Gastrocnemius medialis (tissue), 4 donors: ENCODE measurements at regions of chr1 and their contacts with region 1.

Region 1: GRCh38 chr1:220786337-220787068 is at the start of gene MTARC1:
- DNase-seq: peak; percentile 23 to 56
- ATAC-seq: peak; percentile 74 to 79
- H3K4me3 ChIP-seq: peak within 1 kb of the TSS; percentile 63 to 78 (median 66)
- H3K27ac ChIP-seq: peak within 1 kb of the TSS; percentile 56 to 76 (median 61)
- H3K4me1 ChIP-seq: peaks cover 14 to 30% of the 10 kb centered on the region in 2 donors
- H3K27me3 ChIP-seq: no peaks in the 10 kb centered on the region
- CTCF ChIP-seq: peak in 2 of 5 experiments; percentile 29 to 48
- POLR2A ChIP-seq: peak in 1 of 2 donors; percentile 20
- total RNA-seq, gene MTARC1: 1.2 to 2.9 (median 1.3) TPM

Region 2: DNA sequence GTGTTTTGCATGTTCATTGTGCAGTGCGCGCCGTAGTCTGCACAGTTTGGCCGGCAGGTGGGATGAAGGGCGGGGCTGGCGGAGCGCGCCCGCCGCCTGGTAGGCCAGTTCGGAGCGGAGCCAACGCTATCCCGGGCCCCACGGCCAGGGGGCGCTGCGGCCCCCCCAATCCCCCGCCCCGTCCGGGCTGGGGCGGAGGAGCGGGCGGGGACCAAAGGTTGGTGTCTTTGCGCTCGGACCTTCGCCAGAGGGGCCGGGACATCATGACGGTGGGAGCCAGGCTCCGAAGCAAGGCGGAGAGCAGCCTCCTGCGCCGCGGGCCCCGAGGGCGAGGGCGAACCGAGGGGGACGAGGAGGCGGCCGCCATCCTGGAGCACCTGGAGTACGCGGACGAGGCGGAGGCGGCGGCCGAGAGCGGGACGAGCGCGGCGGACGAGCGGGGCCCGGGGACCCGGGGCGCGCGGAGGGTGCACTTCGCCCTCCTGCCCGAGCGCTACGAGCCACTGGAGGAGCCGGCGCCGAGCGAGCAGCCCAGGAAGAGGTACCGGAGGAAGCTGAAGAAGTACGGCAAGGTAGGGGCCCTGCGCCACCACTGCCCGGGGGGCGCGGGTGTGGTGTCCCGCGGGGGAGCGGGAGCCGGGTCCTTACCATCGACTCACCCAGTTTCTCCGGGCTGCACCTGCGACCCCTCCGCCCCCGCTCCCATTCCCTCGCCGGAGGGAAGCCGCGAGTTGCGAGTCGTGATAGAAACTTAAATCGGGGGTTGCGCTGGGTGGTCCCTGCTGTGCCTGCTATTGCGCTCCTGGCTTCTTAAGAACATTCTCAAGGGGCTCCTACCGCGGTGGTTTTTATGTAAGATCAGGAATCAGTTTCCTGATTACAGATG is 96.1 kb before region 1 on chr1 and contains the start of gene C1orf115:
- in situ Hi-C with region 1: loop called in 1 of 4 experiments (anchors 5 kb)
- intact Hi-C with region 1: no loop called
- DNase-seq: peak; percentile 22 to 66
- ATAC-seq: peak; percentile 89 to 94
- H3K4me3 ChIP-seq: peak within 1 kb of the TSS; percentile 58 to 92 (median 68)
- H3K27ac ChIP-seq: peak within 1 kb of the TSS; percentile 14 to 71 (median 50)
- H3K4me1 ChIP-seq: peaks cover 0 to 10% of the 10 kb centered on the region in 2 donors
- H3K27me3 ChIP-seq: no peaks in the 10 kb centered on the region
- CTCF ChIP-seq: peak; percentile 85 to 96 (median 90)
- POLR2A ChIP-seq: no peak
- total RNA-seq, gene C1orf115: 2.2 to 6.7 (median 4.6) TPM

Region 3: DNA sequence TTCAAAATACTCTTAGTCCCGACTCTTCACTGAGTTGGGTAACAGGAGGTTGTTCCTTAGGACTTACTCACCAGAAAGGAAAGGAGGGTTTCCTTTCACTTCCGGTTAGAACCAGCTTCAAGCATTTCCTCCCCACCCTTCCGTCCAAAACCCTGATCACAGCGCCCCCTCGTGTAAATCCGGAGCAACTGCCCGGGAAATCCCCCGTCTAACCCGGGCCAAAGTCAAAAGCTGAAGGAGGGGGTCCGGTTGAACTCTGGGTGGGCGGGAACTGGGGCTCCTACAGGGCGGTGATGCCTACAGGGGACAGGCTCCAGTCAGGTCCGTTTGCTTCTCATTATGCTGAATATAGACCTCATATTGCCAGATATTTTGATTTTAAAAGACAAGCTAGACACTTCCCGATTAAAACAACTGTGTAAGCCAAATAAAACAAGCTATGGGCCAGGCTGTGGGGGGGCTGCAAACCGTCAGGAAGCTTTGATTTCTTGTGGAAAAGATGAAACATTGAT is 53.4 kb before region 1 on chr1:
- in situ Hi-C with region 1: no loop called
- intact Hi-C with region 1: no loop called
- DNase-seq: peak; percentile 55 to 63
- ATAC-seq: peak; percentile 97 to 100
- H3K4me3 ChIP-seq: peak overlapping the region; percentile 35 to 45 (median 40)
- H3K27ac ChIP-seq: peak overlapping the region; percentile 33 to 73 (median 65)
- H3K4me1 ChIP-seq: peaks cover 4 to 9% of the 10 kb centered on the region in 2 donors
- H3K27me3 ChIP-seq: no peaks in the 10 kb centered on the region
- CTCF ChIP-seq: peak; percentile 70 to 88 (median 84)
- POLR2A ChIP-seq: no peak

Region 4: GRCh38 chr1:220852408-220852807 is 65.9 kb after region 1 on chr1:
- in situ Hi-C with region 1: no loop called
- intact Hi-C with region 1: no loop called
- DNase-seq: no peak
- ATAC-seq: no peak
- H3K4me3 ChIP-seq: no peak overlapping the region
- H3K27ac ChIP-seq: no peak overlapping the region
- H3K4me1 ChIP-seq: no peaks in the 10 kb centered on the region
- H3K27me3 ChIP-seq: no peaks in the 10 kb centered on the region
- CTCF ChIP-seq: no peak
- POLR2A ChIP-seq: no peak

Region 5: GRCh38 chr1:220990427-220991339 is 204.2 kb after region 1 on chr1:
- in situ Hi-C with region 1: no loop called
- intact Hi-C with region 1: no loop called
- DNase-seq: no peak
- ATAC-seq: no peak
- H3K4me3 ChIP-seq: no peak overlapping the region
- H3K27ac ChIP-seq: no peak overlapping the region
- H3K4me1 ChIP-seq: no peaks in the 10 kb centered on the region
- H3K27me3 ChIP-seq: no peaks in the 10 kb centered on the region
- CTCF ChIP-seq: no peak
- POLR2A ChIP-seq: no peak

Region 6: GRCh38 chr1:221192055-221192454 is 405.6 kb after region 1 on chr1:
- in situ Hi-C with region 1: no loop called
- intact Hi-C with region 1: no loop called
- DNase-seq: no peak
- ATAC-seq: no peak
- H3K4me3 ChIP-seq: no peak overlapping the region
- H3K27ac ChIP-seq: no peak overlapping the region
- H3K4me1 ChIP-seq: no peaks in the 10 kb centered on the region
- H3K27me3 ChIP-seq: no peaks in the 10 kb centered on the region
- CTCF ChIP-seq: no peak
- POLR2A ChIP-seq: no peak